B cell (primary cell): ENCODE measurements at regions of chr12 and their contacts with region 1.

Region 1: GRCh38 chr12:67648521-67649260 is at the start of gene DYRK2:
- DNase-seq: peak; percentile 88
- ATAC-seq: peak; percentile 64
- H3K4me3 ChIP-seq: peak within 1 kb of the TSS; percentile 49 to 95 (median 85)
- H3K4me3 Mint-ChIP-seq: peak within 1 kb of the TSS; percentile 98
- H3K27ac ChIP-seq: peak within 1 kb of the TSS; percentile 42 to 77
- H3K27ac Mint-ChIP-seq: peak within 1 kb of the TSS; percentile 95
- H3K4me1 ChIP-seq: peaks cover 25 to 35% of the 10 kb centered on the region in 2 donors
- H3K4me1 Mint-ChIP-seq: peaks cover 39% of the 10 kb centered on the region
- H3K27me3 ChIP-seq: no peaks in the 10 kb centered on the region
- H3K27me3 Mint-ChIP-seq: no peaks in the 10 kb centered on the region
- CTCF ChIP-seq: peak; percentile 15
- total RNA-seq, gene DYRK2: 75.3 and 77.9 TPM in 2 replicates

Region 2: GRCh38 chr12:67268896-67269631 is 379.6 kb before region 1 on chr12 and contains the start of gene CAND1:
- CTCF ChIA-PET with region 1: no interaction called
- POLR2A ChIA-PET with region 1: no interaction called
- intact Hi-C with region 1: loop called (anchors 2 kb)
- DNase-seq: peak; percentile 99
- ATAC-seq: peak; percentile 78
- H3K4me3 ChIP-seq: peak within 1 kb of the TSS; percentile 67 to 94 (median 80)
- H3K4me3 Mint-ChIP-seq: peak within 1 kb of the TSS; percentile 86
- H3K27ac ChIP-seq: peak within 1 kb of the TSS; percentile 90 to 94
- H3K27ac Mint-ChIP-seq: peak within 1 kb of the TSS; percentile 91
- H3K4me1 ChIP-seq: peaks cover 24 to 25% of the 10 kb centered on the region in 2 donors
- H3K4me1 Mint-ChIP-seq: peaks cover 34% of the 10 kb centered on the region
- H3K27me3 ChIP-seq: no peaks in the 10 kb centered on the region
- H3K27me3 Mint-ChIP-seq: no peaks in the 10 kb centered on the region
- CTCF ChIP-seq: no peak
- total RNA-seq, gene CAND1: 108 and 110 TPM in 2 replicates

Region 3: GRCh38 chr12:67441736-67442346 is 206.8 kb before region 1 on chr12:
- CTCF ChIA-PET with region 1: interaction called, 6 read pairs
- POLR2A ChIA-PET with region 1: no interaction called
- intact Hi-C with region 1: loop called (anchors 2 kb)
- DNase-seq: peak; percentile 76
- ATAC-seq: peak; percentile 88
- H3K4me3 ChIP-seq: no peak overlapping the region
- H3K4me3 Mint-ChIP-seq: peak overlapping the region; percentile 18
- H3K27ac ChIP-seq: no peak overlapping the region
- H3K27ac Mint-ChIP-seq: no peak overlapping the region
- H3K4me1 ChIP-seq: peaks cover 7 to 8% of the 10 kb centered on the region in 2 donors
- H3K4me1 Mint-ChIP-seq: peaks cover 8% of the 10 kb centered on the region
- H3K27me3 ChIP-seq: no peaks in the 10 kb centered on the region
- H3K27me3 Mint-ChIP-seq: no peaks in the 10 kb centered on the region
- CTCF ChIP-seq: peak; percentile 83

Region 4: DNA sequence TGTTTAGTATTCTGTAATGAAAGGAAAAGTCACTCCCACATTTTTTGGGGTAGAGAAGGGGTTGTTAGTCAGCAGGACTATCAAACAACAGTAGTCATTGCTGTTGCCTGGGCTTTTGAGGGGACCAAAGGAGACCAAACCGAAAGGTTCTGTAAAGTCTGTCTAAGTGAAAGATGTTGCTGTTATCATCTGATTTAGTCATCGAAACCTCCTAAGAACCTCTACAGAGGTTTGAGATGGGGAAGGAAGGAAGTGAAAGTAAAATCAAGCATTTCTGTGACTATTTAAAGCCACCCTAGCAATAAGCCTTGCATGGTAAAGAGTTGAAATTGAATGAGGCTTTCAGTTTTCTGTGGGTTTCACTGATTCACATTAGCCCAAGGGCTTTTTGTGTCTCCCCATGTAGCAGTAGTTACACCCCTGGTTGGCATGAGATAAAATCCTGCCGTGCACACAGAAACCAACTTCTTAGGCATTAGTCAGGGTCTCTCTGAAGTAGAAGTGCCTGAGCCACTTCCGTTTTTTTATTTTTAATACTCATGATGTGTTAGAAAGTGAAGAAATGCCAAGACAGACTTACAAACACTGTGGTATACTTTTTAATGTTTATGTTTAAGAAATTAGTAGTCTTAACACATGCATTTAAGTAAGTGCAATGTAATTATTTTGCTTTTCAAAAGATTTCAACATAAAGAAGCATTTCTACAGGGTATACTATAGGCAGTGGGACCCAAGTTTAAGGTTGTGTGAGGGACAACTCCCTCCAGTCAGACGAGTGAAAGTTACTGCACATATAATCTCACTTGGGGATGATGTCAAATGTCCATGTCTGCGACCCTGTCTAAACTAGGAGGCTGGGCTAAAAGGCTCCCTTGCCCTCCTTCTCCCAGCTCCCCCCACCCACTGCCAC is 50.2 kb after region 1 on chr12:
- CTCF ChIA-PET with region 1: no interaction called
- POLR2A ChIA-PET with region 1: no interaction called
- intact Hi-C with region 1: loop called (anchors 2 kb)
- DNase-seq: peak; percentile 79
- ATAC-seq: peak; percentile 86
- H3K4me3 ChIP-seq: peak overlapping the region; percentile 8 to 65 (median 52)
- H3K4me3 Mint-ChIP-seq: peak overlapping the region; percentile 78
- H3K27ac ChIP-seq: peak overlapping the region; percentile 23 to 32
- H3K27ac Mint-ChIP-seq: peak overlapping the region; percentile 80
- H3K4me1 ChIP-seq: peaks cover 21 to 28% of the 10 kb centered on the region in 2 donors
- H3K4me1 Mint-ChIP-seq: peaks cover 33% of the 10 kb centered on the region
- H3K27me3 ChIP-seq: peaks cover 0 to 12% (median 3%) of the 10 kb centered on the region in 4 experiments
- H3K27me3 Mint-ChIP-seq: peaks cover 6% of the 10 kb centered on the region
- CTCF ChIP-seq: no peak

Region 5: GRCh38 chr12:67758119-67758518 is 109.4 kb after region 1 on chr12:
- CTCF ChIA-PET with region 1: no interaction called
- POLR2A ChIA-PET with region 1: no interaction called
- intact Hi-C with region 1: loop called (anchors 10 kb)
- DNase-seq: peak; percentile 81
- ATAC-seq: peak; percentile 96
- H3K4me3 ChIP-seq: no peak overlapping the region
- H3K4me3 Mint-ChIP-seq: no peak overlapping the region
- H3K27ac ChIP-seq: no peak overlapping the region
- H3K27ac Mint-ChIP-seq: peak overlapping the region; percentile 11
- H3K4me1 ChIP-seq: peaks cover 23 to 30% of the 10 kb centered on the region in 2 donors
- H3K4me1 Mint-ChIP-seq: peaks cover 28% of the 10 kb centered on the region
- H3K27me3 ChIP-seq: no peaks in the 10 kb centered on the region
- H3K27me3 Mint-ChIP-seq: no peaks in the 10 kb centered on the region
- CTCF ChIP-seq: no peak

Region 6: DNA sequence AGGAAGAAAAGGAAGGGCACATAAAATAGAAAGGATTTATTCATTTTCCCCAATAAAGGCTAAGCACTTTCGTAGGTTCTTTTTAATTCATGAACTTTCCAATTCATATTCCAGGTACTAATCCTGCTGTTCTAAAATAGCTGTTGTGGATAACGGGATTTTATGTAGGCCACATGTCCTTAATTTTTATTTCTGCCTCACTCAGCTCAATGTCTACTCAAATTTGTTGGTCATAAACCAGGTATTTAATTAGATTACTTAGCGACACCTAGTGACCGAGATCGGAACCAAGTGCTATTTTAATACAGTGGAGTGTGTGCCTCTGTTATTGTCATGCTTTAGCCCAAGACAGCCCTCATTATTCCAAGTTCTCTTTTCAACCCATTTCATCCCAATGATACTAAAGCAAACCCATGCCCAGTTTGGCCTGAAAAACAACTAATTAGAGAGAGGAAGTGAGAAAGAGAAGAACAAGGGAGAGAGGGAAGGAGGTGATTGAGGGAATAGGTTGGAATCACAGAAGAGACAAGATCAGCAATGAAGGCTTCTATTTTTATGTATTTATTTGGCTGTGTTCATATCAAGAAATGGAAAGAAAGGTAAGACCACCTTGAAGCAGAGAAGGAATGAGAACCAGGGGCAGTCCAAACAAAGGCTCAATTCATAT is 294.7 kb after region 1 on chr12:
- CTCF ChIA-PET with region 1: interaction called, 6 read pairs
- POLR2A ChIA-PET with region 1: interaction called, 4 read pairs
- intact Hi-C with region 1: loop called (anchors 2 kb)
- DNase-seq: peak; percentile 78
- ATAC-seq: peak; percentile 85
- H3K4me3 ChIP-seq: no peak overlapping the region
- H3K4me3 Mint-ChIP-seq: no peak overlapping the region
- H3K27ac ChIP-seq: no peak overlapping the region
- H3K27ac Mint-ChIP-seq: no peak overlapping the region
- H3K4me1 ChIP-seq: peaks cover 5 to 8% of the 10 kb centered on the region in 2 donors
- H3K4me1 Mint-ChIP-seq: peaks cover 4% of the 10 kb centered on the region
- H3K27me3 ChIP-seq: no peaks in the 10 kb centered on the region
- H3K27me3 Mint-ChIP-seq: peaks cover 3% of the 10 kb centered on the region
- CTCF ChIP-seq: peak; percentile 87